Activated CD8-positive, alpha-beta T cell treated with anti-CD3 and anti-CD28 coated beads, Interleukin-2, amount 10 ng/mL, durations not matched to agents 7 days and 5 days (primary cell): ENCODE measurements at regions of chr12 and their contacts with region 1.

Region 1: DNA sequence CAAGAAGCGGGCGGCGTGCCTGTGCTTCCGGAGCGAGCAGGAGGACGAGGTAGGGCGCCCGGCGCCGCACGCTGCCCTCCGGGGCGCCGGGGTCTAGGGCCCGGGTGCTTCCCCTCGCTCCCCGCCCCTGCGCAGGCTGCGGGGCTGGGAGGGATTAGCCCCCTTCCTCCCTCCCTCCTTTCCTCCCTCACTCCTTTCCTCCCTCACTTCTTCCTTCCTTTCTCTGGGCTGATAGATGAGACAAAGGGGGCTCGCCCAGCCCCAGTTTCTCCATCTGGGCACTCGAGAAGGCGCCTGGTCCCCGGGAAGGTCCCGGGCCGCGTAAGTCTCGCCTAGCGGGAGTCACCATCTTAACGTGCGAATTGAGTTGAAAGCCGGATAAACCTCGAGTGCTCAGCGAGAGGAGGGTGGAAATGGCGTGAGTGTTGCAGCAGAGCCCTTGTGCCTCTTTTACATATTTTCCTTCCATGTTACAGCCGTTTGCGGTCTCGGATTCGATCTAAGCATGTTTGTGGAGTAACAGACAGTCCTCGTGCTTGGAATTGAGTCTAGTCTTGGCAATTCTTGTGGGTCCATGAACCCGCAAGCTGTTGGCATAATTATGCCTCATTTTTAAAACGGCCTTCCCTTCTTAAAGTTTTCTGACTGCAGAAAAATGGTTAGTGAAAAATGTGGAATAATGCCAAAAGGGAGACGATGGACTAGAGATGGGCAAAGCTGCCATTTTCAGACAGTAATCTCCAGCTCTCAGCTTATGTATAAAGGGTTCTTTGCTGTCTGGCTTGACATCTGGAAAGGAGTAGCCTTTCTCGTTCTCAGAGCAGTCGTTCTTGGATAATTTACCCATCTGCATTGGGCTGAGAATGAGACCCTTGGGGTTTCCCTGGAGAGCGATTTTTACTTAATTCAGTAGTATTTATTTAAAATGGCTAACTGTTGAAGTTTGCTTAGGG is 924 bp downstream of the NUDT4 start:
- DNase-seq: peak; percentile 73
- ATAC-seq: peak; percentile 59
- H3K4me3 Mint-ChIP-seq: peak overlapping the region; percentile 99
- H3K27ac Mint-ChIP-seq: peak overlapping the region; percentile 99
- H3K4me1 Mint-ChIP-seq: peaks cover 43% of the 10 kb centered on the region
- H3K27me3 Mint-ChIP-seq: no peaks in the 10 kb centered on the region

Region 2: GRCh38 chr12:93243689-93244513 is 134.7 kb before region 1 on chr12:
- CTCF ChIA-PET with region 1: interaction called, 27 read pairs
- POLR2A ChIA-PET with region 1: interaction called, 4 read pairs
- DNase-seq: peak; percentile 49
- ATAC-seq: peak; percentile 16
- H3K4me3 Mint-ChIP-seq: peak overlapping the region; percentile 51
- H3K27ac Mint-ChIP-seq: peak overlapping the region; percentile 81
- H3K4me1 Mint-ChIP-seq: peaks cover 52% of the 10 kb centered on the region
- H3K27me3 Mint-ChIP-seq: no peaks in the 10 kb centered on the region

Region 3: DNA sequence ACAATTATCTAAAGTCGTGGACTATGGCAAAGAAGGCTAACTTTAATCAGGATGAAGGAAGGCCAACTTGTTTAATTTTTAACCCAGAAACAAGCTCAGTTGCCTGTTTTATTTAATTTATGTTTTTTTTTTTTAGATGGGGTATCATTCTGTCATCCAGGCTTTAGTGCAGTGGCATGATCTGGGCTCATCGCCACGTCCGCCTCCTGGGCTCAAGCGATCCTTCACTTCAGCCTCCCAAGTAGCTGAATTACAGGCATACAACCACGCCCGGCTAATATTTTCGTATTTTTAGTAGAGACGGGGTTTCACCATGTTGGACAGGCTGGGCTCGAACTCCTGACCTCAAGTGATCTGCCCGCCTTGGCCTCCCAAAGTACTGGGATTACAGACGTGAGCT is 18.8 kb after region 1 on chr12:
- CTCF ChIA-PET with region 1: interaction called, 10 read pairs
- POLR2A ChIA-PET with region 1: no interaction called
- DNase-seq: no peak
- ATAC-seq: no peak
- H3K4me3 Mint-ChIP-seq: no peak overlapping the region
- H3K27ac Mint-ChIP-seq: no peak overlapping the region
- H3K4me1 Mint-ChIP-seq: no peaks in the 10 kb centered on the region
- H3K27me3 Mint-ChIP-seq: no peaks in the 10 kb centered on the region

Region 4: GRCh38 chr12:93653079-93653478 is 274.4 kb after region 1 on chr12:
- CTCF ChIA-PET with region 1: no interaction called
- POLR2A ChIA-PET with region 1: no interaction called
- DNase-seq: no peak
- ATAC-seq: no peak
- H3K4me3 Mint-ChIP-seq: no peak overlapping the region
- H3K27ac Mint-ChIP-seq: no peak overlapping the region
- H3K4me1 Mint-ChIP-seq: no peaks in the 10 kb centered on the region
- H3K27me3 Mint-ChIP-seq: peaks cover 7% of the 10 kb centered on the region

Region 5: DNA sequence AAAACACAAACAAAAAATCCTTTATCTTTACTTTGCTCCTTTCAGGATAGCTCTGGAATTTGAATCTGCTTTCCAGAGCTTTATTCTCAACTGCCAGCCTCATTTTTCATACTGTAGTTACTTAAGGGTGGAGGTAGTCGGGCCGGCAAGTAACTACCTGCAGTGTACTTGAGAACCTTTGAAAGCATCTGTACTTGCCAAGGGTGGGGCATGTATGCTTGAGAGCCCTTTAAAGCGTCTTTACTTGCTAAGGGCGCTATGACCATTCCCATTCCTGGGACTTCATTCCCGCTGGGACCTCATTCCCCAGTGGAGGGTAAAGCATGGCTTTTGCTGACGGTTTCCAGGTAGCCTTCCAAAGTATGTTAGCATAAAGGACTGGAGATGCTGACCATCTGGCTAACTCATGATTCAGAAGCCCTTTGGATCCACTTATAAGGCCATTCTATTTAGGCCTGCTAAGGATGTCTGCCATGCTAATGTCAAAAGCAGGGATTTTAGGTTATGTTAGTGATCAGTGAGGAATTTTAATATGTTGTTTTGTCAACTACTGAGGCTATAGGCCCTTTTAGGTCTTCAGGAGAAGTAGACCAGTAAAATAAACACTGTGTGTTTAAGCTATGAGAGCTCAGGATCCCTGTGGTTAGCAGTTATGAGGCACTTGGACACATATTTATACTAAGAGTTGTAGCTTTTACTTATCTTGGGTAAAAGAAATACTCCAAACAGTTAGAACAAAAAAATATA is 373.4 kb after region 1 on chr12:
- CTCF ChIA-PET with region 1: no interaction called
- POLR2A ChIA-PET with region 1: no interaction called
- DNase-seq: no peak
- ATAC-seq: no peak
- H3K4me3 Mint-ChIP-seq: no peak overlapping the region
- H3K27ac Mint-ChIP-seq: no peak overlapping the region
- H3K4me1 Mint-ChIP-seq: peaks cover 15% of the 10 kb centered on the region
- H3K27me3 Mint-ChIP-seq: no peaks in the 10 kb centered on the region